CD4-positive, alpha-beta memory T cell (primary cell): ENCODE measurements at regions of chr18 and their contacts with region 1.

Region 1: DNA sequence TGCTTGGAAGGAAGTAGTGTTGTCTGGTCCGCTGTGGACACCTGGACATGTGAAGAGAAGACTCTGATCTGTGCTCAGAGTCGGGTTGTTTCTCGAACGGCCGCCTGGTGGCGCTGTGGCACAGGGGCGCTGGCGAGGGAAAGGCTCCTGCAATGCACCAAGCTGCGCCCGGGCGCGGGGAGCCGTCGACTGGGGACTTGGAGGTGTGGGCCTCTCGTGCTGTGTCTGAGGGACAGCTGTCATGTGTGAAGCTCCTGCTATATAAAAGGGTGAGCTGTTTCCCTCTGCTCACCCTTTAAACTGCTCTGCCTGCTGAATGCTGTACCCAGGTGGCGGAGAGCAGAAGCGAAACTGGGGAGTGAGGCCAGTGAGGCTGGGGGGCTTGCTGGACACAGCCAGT is 44.0 kb downstream of the GNAL start:
- DNase-seq: peak; percentile 38 to 58 (median 44)
- H3K4me3 ChIP-seq: no peak overlapping the region
- H3K4me3 Mint-ChIP-seq: peak overlapping the region in 2 of 8 donors; percentile 22 to 27
- H3K27ac ChIP-seq: no peak overlapping the region
- H3K27ac Mint-ChIP-seq: no peak overlapping the region
- H3K4me1 ChIP-seq: no peaks in the 10 kb centered on the region
- H3K4me1 Mint-ChIP-seq: peaks cover 0 to 3% (median under 1%) of the 10 kb centered on the region in 4 donors
- H3K27me3 ChIP-seq: no peaks in the 10 kb centered on the region
- H3K27me3 Mint-ChIP-seq: peaks cover 18 to 26% of the 10 kb centered on the region in 2 donors

Region 2: DNA sequence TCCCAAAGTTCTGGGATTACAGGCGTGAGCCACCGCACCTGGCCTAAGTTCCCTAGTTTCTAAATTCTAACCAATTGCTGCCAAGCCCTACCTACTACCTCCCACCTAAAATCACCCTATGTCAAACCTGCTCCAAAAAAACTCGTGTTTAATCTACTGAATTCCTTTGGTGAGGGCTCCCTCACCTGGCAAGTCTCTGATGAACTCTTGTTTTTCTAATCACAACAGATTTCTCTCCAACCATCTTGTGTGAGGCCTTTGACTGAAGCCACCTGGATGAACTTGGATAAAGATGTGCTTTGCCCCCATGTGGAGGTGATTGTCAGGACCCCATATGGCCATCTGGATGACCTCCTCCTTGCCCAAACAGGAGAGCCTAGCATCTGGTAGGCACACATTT is 141.1 kb before region 1 on chr18:
- CTCF ChIA-PET with region 1: no interaction called
- POLR2A ChIA-PET with region 1: no interaction called
- intact Hi-C with region 1: no loop called
- DNase-seq: peak in 1 of 5 donors; percentile 2
- H3K4me3 ChIP-seq: no peak overlapping the region
- H3K4me3 Mint-ChIP-seq: no peak overlapping the region
- H3K27ac ChIP-seq: no peak overlapping the region
- H3K27ac Mint-ChIP-seq: no peak overlapping the region
- H3K4me1 ChIP-seq: peaks cover 18% of the 10 kb centered on the region
- H3K4me1 Mint-ChIP-seq: peaks cover 9 to 17% (median 13%) of the 10 kb centered on the region in 4 donors
- H3K27me3 ChIP-seq: no peaks in the 10 kb centered on the region
- H3K27me3 Mint-ChIP-seq: peaks cover 8 to 9% of the 10 kb centered on the region in 2 donors

Region 3: GRCh38 chr18:12236934-12237832 is 504.2 kb after region 1 on chr18:
- CTCF ChIA-PET with region 1: no interaction called
- POLR2A ChIA-PET with region 1: no interaction called
- intact Hi-C with region 1: loop called (anchors 5 kb)
- DNase-seq: peak in 4 of 5 donors; percentile 27 to 44 (median 36)
- H3K4me3 ChIP-seq: no peak overlapping the region
- H3K4me3 Mint-ChIP-seq: no peak overlapping the region
- H3K27ac ChIP-seq: no peak overlapping the region
- H3K27ac Mint-ChIP-seq: no peak overlapping the region
- H3K4me1 ChIP-seq: no peaks in the 10 kb centered on the region
- H3K4me1 Mint-ChIP-seq: peaks cover 0 to 4% (median 0%) of the 10 kb centered on the region in 4 donors
- H3K27me3 ChIP-seq: no peaks in the 10 kb centered on the region
- H3K27me3 Mint-ChIP-seq: peaks cover 13 to 14% of the 10 kb centered on the region in 2 donors